Transverse colon (tissue), 4 donors: ENCODE measurements at regions of chr2 and their contacts with region 1.

Region 1: GRCh38 chr2:48890454-48891131 is 135.1 kb upstream of the LHCGR start:
- DNase-seq: no peak
- H3K4me3 ChIP-seq: no peak overlapping the region
- H3K27ac ChIP-seq: no peak overlapping the region
- H3K4me1 ChIP-seq: no peaks in the 10 kb centered on the region
- H3K27me3 ChIP-seq: no peaks in the 10 kb centered on the region
- CTCF ChIP-seq: no peak
- EP300 ChIP-seq: no peak
- POLR2A ChIP-seq: no peak

Region 2: GRCh38 chr2:50097148-50097547 is 1206.6 kb after region 1 on chr2:
- in situ Hi-C with region 1: no loop called
- intact Hi-C with region 1: loop called (anchors 5 kb)
- DNase-seq: no peak
- H3K4me3 ChIP-seq: no peak overlapping the region
- H3K27ac ChIP-seq: no peak overlapping the region
- H3K4me1 ChIP-seq: no peaks in the 10 kb centered on the region
- H3K27me3 ChIP-seq: no peaks in the 10 kb centered on the region
- CTCF ChIP-seq: no peak
- EP300 ChIP-seq: no peak
- POLR2A ChIP-seq: no peak